CD8-positive, alpha-beta T cell (primary cell): ENCODE measurements at regions of chr2 and their contacts with region 1.

Region 1: DNA sequence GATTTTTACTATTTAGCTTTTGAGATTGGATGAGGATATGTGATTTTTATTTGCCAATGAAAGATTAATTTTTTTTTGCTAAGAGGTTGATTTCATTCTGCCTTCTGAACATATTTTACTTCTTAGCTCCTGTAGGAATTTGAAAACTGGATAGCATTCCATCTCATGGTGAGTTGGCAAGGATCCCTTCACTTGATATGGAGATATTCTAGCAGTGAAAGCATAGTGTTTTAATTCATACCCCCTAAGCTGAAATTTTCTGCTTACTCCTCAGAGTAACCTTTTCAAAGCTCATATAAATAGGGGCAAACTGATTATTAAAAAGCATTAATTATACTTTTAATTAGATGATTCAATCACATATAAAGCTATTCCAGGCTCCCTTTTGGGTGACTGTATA is 61.0 kb upstream of the KCNJ3 start:
- DNase-seq: no peak
- ATAC-seq: no peak
- H3K4me3 ChIP-seq: no peak overlapping the region
- H3K4me3 Mint-ChIP-seq: no peak overlapping the region
- H3K27ac ChIP-seq: no peak overlapping the region
- H3K27ac Mint-ChIP-seq: no peak overlapping the region
- H3K4me1 ChIP-seq: no peaks in the 10 kb centered on the region
- H3K4me1 Mint-ChIP-seq: no peaks in the 10 kb centered on the region
- H3K27me3 ChIP-seq: no peaks in the 10 kb centered on the region
- H3K27me3 Mint-ChIP-seq: no peaks in the 10 kb centered on the region
- CTCF ChIP-seq: no peak

Region 2: DNA sequence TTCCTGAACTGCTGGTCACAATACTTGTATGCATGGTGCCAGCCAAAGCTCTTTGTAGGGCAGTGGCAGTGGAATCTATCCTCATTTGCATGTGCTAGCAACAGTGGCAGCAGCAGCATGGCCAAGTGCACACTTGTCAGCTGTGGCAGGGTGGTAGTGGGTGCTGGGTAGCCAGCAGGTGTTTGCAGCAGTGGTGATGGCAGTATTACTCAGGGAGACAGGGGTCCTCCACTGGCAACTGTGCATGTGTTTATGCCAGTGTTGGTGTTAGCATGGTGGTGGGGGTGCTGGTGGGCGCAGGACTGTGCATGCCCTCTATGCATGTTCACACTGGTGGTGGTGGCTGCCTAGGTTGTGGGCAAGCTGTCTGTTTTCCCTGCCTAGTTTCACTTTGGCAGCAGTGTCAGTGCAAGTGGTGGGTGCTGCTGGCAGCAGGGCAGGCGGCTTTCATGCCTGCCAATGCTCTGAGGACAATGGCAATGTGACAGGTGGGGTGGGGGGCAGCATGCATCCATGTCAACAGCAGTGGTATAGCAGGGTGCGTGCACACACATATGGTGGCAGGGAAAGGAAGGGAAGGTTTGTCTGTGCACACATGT is 724.6 kb before region 1 on chr2:
- CTCF ChIA-PET with region 1: no interaction called
- POLR2A ChIA-PET with region 1: no interaction called
- intact Hi-C with region 1: loop called in 1 of 2 experiments (anchors 5 kb)
- DNase-seq: no peak
- ATAC-seq: no peak
- H3K4me3 ChIP-seq: no peak overlapping the region
- H3K4me3 Mint-ChIP-seq: no peak overlapping the region
- H3K27ac ChIP-seq: no peak overlapping the region
- H3K27ac Mint-ChIP-seq: no peak overlapping the region
- H3K4me1 ChIP-seq: no peaks in the 10 kb centered on the region
- H3K4me1 Mint-ChIP-seq: no peaks in the 10 kb centered on the region
- H3K27me3 ChIP-seq: no peaks in the 10 kb centered on the region
- H3K27me3 Mint-ChIP-seq: no peaks in the 10 kb centered on the region
- CTCF ChIP-seq: no peak

Region 3: GRCh38 chr2:154518872-154519271 is 118.6 kb before region 1 on chr2:
- CTCF ChIA-PET with region 1: no interaction called
- POLR2A ChIA-PET with region 1: no interaction called
- intact Hi-C with region 1: no loop called
- DNase-seq: no peak
- ATAC-seq: no peak
- H3K4me3 ChIP-seq: no peak overlapping the region
- H3K4me3 Mint-ChIP-seq: no peak overlapping the region
- H3K27ac ChIP-seq: no peak overlapping the region
- H3K27ac Mint-ChIP-seq: no peak overlapping the region
- H3K4me1 ChIP-seq: no peaks in the 10 kb centered on the region
- H3K4me1 Mint-ChIP-seq: peaks cover 2% of the 10 kb centered on the region
- H3K27me3 ChIP-seq: no peaks in the 10 kb centered on the region
- H3K27me3 Mint-ChIP-seq: no peaks in the 10 kb centered on the region
- CTCF ChIP-seq: no peak